ENCODE measurements at regions of chr10 and their contacts with region 1.

Region 1: GRCh38 chr10:62527019-62527827 is 153.1 kb downstream of the ZNF365 start:
- DNase-seq: no peak
- ATAC-seq: no peak
- H3K4me3 ChIP-seq: no peak overlapping the region
- H3K27ac ChIP-seq: no peak overlapping the region
- H3K4me1 ChIP-seq: no peaks in the 10 kb centered on the region
- H3K27me3 ChIP-seq: no peaks in the 10 kb centered on the region
- CTCF ChIP-seq: no peak
- POLR2A ChIP-seq: no peak
- RAD21 ChIP-seq: no peak

Region 2: DNA sequence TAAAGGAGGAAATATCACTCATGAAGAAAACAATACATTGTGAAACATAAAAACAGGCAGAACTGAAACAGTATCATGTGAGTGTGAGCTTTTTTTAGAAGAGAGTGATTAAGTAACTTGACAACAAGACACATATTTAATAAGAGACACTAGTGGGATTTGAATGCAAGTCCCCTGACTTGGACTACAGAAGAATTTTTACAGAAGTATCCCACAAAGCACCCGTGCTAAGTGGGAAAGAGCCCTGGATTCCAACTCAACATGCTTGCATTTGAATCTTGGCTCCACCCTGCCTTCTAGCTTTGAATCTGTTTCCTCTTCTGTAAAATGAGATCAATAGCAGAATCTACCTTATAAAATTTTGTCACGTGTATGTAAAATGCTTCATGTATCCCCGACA is 13.2 kb after region 1 on chr10:
- CTCF ChIA-PET with region 1: no interaction called
- POLR2A ChIA-PET with region 1: no interaction called
- RAD21 ChIA-PET with region 1: no interaction called
- intact Hi-C with region 1: loop called (anchors 1 kb)
- DNase-seq: no peak
- ATAC-seq: no peak
- H3K4me3 ChIP-seq: no peak overlapping the region
- H3K27ac ChIP-seq: no peak overlapping the region
- H3K4me1 ChIP-seq: no peaks in the 10 kb centered on the region
- H3K27me3 ChIP-seq: no peaks in the 10 kb centered on the region
- CTCF ChIP-seq: no peak
- POLR2A ChIP-seq: no peak
- RAD21 ChIP-seq: no peak